ENCODE measurements at regions of chr10 and their contacts with region 1.

Region 1: GRCh38 chr10:73152009-73152408 is 15.8 kb downstream of the ECD start:
- DNase-seq: no peak
- H3K4me3 ChIP-seq: no peak overlapping the region
- H3K27ac ChIP-seq: no peak overlapping the region
- H3K4me1 ChIP-seq: no peaks in the 10 kb centered on the region
- H3K27me3 ChIP-seq: no peaks in the 10 kb centered on the region
- CTCF ChIP-seq: no peak

Region 2: DNA sequence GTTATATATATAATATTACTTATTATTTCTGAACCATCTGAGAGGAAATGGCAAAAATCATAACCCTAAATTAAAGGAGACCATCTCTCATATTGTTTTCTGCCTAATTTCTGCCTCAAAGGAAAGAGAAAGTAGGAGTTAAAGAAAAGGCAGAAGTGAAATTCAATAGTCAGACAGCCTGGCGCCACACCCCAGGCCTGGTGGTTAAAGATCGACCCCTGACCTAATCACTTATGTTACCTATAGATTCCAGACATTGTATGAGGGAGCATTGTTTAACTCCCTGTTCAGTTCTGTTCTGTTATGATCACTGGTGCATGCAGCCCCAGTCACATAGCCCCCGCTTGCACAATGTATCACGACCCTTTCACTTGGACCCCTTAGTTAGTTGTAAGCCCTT is 1212.7 kb before region 1 on chr10:
- CTCF ChIA-PET with region 1: no interaction called
- POLR2A ChIA-PET with region 1: interaction called, 10 read pairs
- intact Hi-C with region 1: no loop called
- DNase-seq: no peak
- H3K4me3 ChIP-seq: no peak overlapping the region
- H3K27ac ChIP-seq: no peak overlapping the region
- H3K4me1 ChIP-seq: peaks cover 13% of the 10 kb centered on the region; the same call in 1 of the 2 replicates
- H3K27me3 ChIP-seq: no peaks in the 10 kb centered on the region
- CTCF ChIP-seq: no peak